Caco-2 (cell line): ENCODE measurements at regions of chr6 and their contacts with region 1.

Region 1: DNA sequence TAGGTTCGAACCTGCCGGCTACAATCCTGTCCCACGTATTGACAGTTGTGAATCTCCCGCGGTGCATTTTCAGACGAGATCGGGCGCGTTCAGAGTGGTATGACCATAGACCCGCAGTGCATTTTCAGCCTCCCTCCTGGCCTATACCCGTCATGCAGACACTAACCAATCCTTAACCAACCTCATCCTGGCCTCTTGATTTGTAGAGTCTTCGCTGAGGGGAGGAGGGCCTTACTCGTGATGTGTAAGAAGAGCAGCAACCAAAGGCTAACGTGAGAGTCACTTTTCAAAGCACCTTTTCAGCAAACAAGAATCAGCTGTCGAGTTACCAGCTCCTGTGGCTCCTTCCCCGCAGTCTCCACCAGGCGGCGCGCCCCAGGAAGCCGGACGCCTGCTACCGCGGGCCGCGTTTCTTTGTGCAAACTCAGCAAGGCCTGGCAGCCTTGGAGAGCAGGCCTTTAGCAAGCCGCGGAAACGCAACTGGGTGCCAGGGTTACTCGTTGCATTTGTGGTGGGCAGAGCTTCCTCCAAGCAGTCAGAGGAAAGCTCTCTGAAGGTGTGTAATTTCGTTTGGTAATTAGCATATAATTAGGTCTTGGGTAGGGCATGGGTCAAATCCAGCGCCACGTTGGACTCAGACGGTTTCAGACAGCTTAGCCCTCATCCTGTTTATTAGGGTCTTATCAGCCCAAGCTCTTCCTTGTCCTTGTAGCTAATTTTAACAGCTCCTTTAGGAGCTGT is 139.8 kb downstream of the OR2B2 start:
- DNase-seq: peak; percentile 78 to 86
- H3K4me3 ChIP-seq: peak overlapping the region; percentile 4; the same call in 1 of the 2 replicates
- H3K4me3 Mint-ChIP-seq: peak overlapping the region; percentile 59
- H3K27ac Mint-ChIP-seq: peak overlapping the region; percentile 51
- H3K4me1 ChIP-seq: peaks cover 19% of the 10 kb centered on the region
- H3K4me1 Mint-ChIP-seq: peaks cover 23% of the 10 kb centered on the region
- H3K27me3 ChIP-seq: no peaks in the 10 kb centered on the region
- H3K27me3 Mint-ChIP-seq: no peaks in the 10 kb centered on the region
- CTCF ChIP-seq: peak; percentile 76 to 90

Region 2: GRCh38 chr6:27795697-27796494 is 23.5 kb after region 1 on chr6:
- CTCF ChIA-PET with region 1: interaction called, 25 read pairs
- POLR2A ChIA-PET with region 1: interaction called, 4 read pairs
- intact Hi-C with region 1: loop called (anchors 1 kb)
- DNase-seq: peak; percentile 56 to 88
- H3K4me3 ChIP-seq: no peak overlapping the region
- H3K4me3 Mint-ChIP-seq: peak overlapping the region; percentile 52
- H3K27ac Mint-ChIP-seq: peak overlapping the region; percentile 77
- H3K4me1 ChIP-seq: peaks cover 22% of the 10 kb centered on the region
- H3K4me1 Mint-ChIP-seq: peaks cover 16% of the 10 kb centered on the region
- H3K27me3 ChIP-seq: no peaks in the 10 kb centered on the region
- H3K27me3 Mint-ChIP-seq: peaks cover 3% of the 10 kb centered on the region
- CTCF ChIP-seq: peak; percentile 60 to 79